ENCODE measurements at regions of chr11 and their contacts with region 1.

Region 1: DNA sequence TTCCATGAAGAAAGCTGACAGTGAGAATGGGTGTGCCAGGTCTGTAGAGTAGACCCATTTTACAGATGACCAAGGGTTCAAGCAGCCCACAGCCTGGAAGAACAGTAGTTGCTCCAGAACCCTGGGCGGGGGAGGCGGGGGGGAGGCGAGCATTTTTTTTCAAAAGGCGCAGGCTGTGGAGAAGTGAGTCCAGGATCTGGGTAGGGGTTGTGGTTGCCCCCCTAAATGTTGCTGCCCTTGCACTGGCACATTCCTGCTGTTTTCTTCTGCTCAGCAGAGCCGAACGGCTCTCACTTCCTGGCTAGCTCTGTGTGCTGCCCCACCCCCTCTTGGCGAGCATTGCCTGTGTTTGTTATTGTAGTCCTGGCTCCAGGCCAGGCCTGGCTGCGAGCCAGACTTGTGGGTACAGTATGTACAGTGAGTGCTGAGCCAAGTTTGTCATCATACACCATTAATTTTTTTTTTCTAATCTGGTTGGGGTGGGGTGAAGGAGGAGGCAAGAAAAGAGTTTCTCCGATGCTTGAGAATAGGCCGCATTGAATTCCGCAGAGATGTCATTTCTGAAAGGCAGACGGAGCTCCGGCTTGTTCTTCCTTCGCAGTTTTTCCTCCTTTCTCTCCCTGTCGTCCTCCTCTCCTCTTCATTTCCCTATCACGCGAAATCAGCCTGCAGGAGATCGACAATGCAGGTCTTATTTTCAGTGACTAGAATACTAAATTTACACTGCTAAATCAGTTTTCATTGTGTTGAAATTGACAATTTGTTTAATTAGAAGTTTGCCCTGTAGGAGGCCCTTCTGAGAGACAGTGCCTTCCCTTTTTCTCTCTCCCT is 100.5 kb downstream of the ZBTB16 start:
- DNase-seq: peak; percentile 95 to 100
- ATAC-seq: peak; percentile 26 to 32
- H3K4me3 ChIP-seq: peak overlapping the region; percentile 48 to 62 (median 58)
- H3K27ac ChIP-seq: peak overlapping the region; percentile 94 to 99 (median 96)
- H3K4me1 ChIP-seq: peaks cover 81 to 91% of the 10 kb centered on the region in 2 donors
- H3K27me3 ChIP-seq: no peaks in the 10 kb centered on the region
- CTCF ChIP-seq: no peak
- POLR2A ChIP-seq: no peak

Region 2: GRCh38 chr11:114073828-114074381 is 86.1 kb before region 1 on chr11:
- in situ Hi-C with region 1: no loop called
- intact Hi-C with region 1: loop called (anchors 2 kb)
- DNase-seq: peak in 1 of 2 donors; percentile 46
- ATAC-seq: no peak
- H3K4me3 ChIP-seq: peak overlapping the region; percentile 46 to 54 (median 50)
- H3K27ac ChIP-seq: peak overlapping the region; percentile 94 to 99 (median 96)
- H3K4me1 ChIP-seq: peaks cover 82 to 96% of the 10 kb centered on the region in 2 donors
- H3K27me3 ChIP-seq: no peaks in the 10 kb centered on the region
- CTCF ChIP-seq: no peak
- POLR2A ChIP-seq: peak in 1 of 2 donors; percentile 53

Region 3: GRCh38 chr11:114099392-114100178 is 60.4 kb before region 1 on chr11:
- in situ Hi-C with region 1: no loop called
- intact Hi-C with region 1: loop called (anchors 2 kb)
- DNase-seq: peak; percentile 53 to 80
- ATAC-seq: peak; percentile 48 to 81
- H3K4me3 ChIP-seq: peak overlapping the region; percentile 11 to 43 (median 24)
- H3K27ac ChIP-seq: peak overlapping the region; percentile 94 to 99 (median 96)
- H3K4me1 ChIP-seq: peaks cover 97 to 98% of the 10 kb centered on the region in 2 donors
- H3K27me3 ChIP-seq: no peaks in the 10 kb centered on the region
- CTCF ChIP-seq: no peak
- POLR2A ChIP-seq: peak; percentile 24 to 69

Region 4: DNA sequence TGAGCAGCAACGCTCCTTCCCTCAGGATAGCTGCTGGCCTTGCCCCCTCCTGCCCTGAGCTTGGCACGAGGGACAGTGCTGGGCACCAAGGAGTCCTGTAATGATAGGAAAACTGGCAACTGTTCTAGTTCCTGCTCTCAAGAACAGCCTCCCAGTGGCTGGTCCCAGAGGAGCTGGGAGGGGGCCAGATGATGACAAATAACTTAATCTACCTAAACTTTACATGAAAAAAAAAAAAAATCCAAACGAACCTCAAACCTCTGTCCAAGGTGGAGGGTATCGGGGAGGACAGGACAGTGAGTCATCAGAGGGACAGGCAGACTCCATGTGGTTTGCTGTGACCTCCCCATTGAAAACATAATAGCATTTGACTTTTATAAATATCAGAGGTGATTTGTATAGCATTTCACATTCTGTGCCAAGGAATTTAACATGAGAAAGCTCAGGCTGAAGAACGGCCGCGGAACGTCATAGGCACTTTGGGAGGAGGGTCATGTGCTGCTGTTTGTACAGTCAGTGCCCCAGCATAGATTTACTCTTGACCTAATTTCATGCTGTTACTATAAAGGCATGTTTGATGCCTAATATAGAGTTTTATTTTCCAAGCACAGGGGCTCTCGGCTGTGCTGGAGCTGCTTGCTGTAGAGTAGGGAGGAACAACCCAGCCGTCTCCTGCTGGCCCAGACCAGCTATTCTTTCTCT is 37.9 kb after region 1 on chr11:
- in situ Hi-C with region 1: loop called in 1 of 4 experiments (anchors 5 kb)
- intact Hi-C with region 1: loop called (anchors 5 kb)
- DNase-seq: peak; percentile 91 to 96
- ATAC-seq: peak; percentile 65 to 68
- H3K4me3 ChIP-seq: peak overlapping the region in 2 of 4 donors; percentile 11 to 23
- H3K27ac ChIP-seq: peak overlapping the region; percentile 90 to 99 (median 96)
- H3K4me1 ChIP-seq: peaks cover 95 to 98% of the 10 kb centered on the region in 2 donors
- H3K27me3 ChIP-seq: no peaks in the 10 kb centered on the region
- CTCF ChIP-seq: no peak
- POLR2A ChIP-seq: peak; percentile 80 to 96

Region 5: DNA sequence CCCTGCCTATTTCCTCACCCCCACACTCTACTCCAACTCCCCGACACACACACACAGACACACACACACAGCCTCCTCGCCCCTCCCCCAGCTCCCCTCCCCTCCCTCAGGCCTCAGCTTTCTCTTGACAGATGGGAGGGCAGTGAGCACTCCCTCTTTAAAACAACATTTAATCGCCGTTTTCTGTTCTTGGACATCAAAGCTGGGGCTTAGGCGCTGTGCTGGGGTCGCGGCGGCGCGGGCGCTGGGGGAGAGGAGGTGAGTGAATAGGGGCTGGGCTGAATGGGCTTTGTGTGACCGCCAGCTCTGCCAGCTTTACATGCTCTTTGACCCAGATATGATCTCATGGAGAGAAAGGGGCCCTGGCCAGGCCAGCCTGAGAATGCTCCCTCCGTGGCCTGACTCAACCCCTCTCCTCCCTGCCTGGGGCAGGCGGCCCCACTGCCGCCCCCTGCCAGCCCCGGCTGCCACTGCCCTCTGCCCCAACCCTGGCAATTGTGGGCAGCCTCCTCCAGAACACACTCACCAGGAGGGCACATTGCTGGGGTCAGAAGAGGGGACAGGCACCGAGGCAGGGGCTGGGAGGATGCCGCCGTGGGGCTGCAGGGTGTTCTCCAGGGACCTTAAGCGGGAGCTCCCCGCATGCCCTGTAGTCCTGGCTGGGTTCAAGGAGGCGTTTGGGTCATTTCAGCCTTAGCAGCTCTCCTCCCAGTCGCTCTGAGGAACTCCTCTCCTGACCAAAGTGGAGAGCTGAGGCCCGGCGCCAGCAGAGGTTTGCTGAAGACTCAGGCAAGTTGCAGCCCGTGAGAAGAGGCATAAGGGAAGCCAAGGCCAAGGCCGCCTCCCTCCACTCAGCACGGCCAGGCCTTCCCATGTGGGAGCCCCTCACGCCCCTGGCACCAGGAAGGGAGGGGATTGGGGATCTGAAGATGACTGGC is 97.9 kb after region 1 on chr11:
- in situ Hi-C with region 1: no loop called
- intact Hi-C with region 1: loop called (anchors 5 kb)
- DNase-seq: peak; percentile 63 to 84
- ATAC-seq: peak; percentile 8 to 18
- H3K4me3 ChIP-seq: peak overlapping the region in 2 of 4 donors; percentile 17 to 26
- H3K27ac ChIP-seq: peak overlapping the region; percentile 87 to 98 (median 95)
- H3K4me1 ChIP-seq: peaks cover 67 to 89% of the 10 kb centered on the region in 2 donors
- H3K27me3 ChIP-seq: no peaks in the 10 kb centered on the region
- CTCF ChIP-seq: peak in 2 of 5 experiments; percentile 38 to 40
- POLR2A ChIP-seq: peak in 1 of 2 donors; percentile 12

Region 6: DNA sequence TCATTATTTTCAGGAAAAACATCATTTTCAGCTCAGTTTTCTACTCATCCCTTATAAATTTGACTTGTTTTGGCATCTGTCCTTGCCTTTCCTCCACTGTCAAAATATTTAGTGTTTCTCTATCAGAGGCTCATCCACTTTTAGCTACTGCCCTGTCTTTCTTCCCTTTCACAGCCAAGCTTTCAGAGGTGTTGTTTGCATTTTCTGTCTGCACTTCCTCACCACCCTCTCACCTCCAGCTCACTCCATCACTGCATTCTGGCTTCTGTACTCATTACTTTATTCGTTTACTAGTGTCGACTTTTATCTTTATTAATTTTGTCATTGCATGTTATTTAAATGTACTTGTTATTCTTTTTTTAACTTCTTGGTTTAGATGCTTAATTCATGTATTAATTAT is 109.5 kb after region 1 on chr11:
- in situ Hi-C with region 1: no loop called
- intact Hi-C with region 1: no loop called
- DNase-seq: no peak
- ATAC-seq: no peak
- H3K4me3 ChIP-seq: no peak overlapping the region
- H3K27ac ChIP-seq: no peak overlapping the region
- H3K4me1 ChIP-seq: no peaks in the 10 kb centered on the region
- H3K27me3 ChIP-seq: no peaks in the 10 kb centered on the region
- CTCF ChIP-seq: no peak
- POLR2A ChIP-seq: no peak

Region 7: GRCh38 chr11:114295676-114296604 is 135.9 kb after region 1 on chr11 and contains the start of gene NNMT:
- in situ Hi-C with region 1: no loop called
- intact Hi-C with region 1: loop called (anchors 5 kb)
- DNase-seq: peak; percentile 53 to 78
- ATAC-seq: peak; percentile 41 to 57
- H3K4me3 ChIP-seq: peak within 1 kb of the TSS; percentile 47 to 62 (median 52)
- H3K27ac ChIP-seq: peak within 1 kb of the TSS; percentile 68 to 83 (median 78)
- H3K4me1 ChIP-seq: peaks cover 32 to 39% of the 10 kb centered on the region in 2 donors
- H3K27me3 ChIP-seq: no peaks in the 10 kb centered on the region
- CTCF ChIP-seq: no peak
- POLR2A ChIP-seq: peak; percentile 55 to 78
- total RNA-seq, gene NNMT: 157 to 968 (median 541) TPM